ENCODE measurements at regions of chr3 and their contacts with region 1.

Region 1: DNA sequence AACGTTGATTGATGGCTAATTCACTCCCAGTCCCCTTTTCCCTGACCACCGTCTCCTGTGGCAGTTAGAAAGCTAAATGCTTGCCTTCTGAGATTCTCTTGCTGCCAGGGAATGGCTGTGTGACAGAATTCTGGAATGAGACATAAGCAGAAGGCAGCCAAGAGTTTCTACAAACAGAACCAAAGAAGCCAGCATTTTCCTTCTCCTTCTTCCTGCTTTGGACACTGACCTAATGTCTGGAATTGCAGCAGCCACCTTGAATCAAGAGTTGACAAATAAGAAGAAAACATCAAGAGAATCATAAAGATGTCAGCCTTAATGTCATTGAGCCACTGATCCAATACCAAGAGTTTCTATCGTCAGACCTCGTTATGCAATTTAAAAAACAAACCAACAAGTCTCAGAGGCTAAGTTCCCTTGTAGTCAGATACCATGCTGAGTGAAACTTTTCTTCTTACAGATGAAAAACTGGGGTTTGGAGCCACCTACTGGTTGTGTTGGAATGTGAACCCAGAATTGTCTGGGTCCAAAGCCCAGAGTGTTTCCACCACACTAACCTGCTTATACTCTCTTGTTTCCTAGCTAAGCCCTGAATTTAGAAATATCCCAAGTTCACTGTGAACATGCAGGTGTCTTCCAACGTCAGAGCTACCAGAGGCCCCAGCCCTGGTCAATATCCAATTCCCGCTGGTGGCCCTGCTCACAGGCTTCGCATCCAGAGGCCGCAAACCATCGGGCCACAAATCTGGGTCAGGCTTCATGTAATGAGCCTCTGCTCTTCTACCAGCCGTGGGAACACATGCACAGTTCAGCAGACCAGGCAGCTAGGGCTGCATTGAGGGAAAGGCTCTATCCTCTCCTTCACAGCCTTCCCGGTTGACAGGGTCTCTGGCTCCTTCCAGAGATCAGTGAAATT is 42.5 kb downstream of the MCF2L2 start:
- DNase-seq: peak; percentile 85
- H3K4me3 ChIP-seq: peak overlapping the region; percentile 23
- H3K27ac ChIP-seq: no peak overlapping the region
- H3K4me1 ChIP-seq: peaks cover 8% of the 10 kb centered on the region; the same call in 1 of the 2 replicates
- H3K27me3 ChIP-seq: no peaks in the 10 kb centered on the region

Region 2: GRCh38 chr3:182713743-182714517 is 672.0 kb before region 1 on chr3:
- in situ Hi-C with region 1: loop called (anchors 25 kb)
- DNase-seq: peak; percentile 80
- H3K4me3 ChIP-seq: no peak overlapping the region
- H3K27ac ChIP-seq: no peak overlapping the region
- H3K4me1 ChIP-seq: no peaks in the 10 kb centered on the region
- H3K27me3 ChIP-seq: no peaks in the 10 kb centered on the region

Region 3: GRCh38 chr3:182909318-182910040 is 476.5 kb before region 1 on chr3:
- in situ Hi-C with region 1: loop called (anchors 25 kb)
- DNase-seq: peak; percentile 44
- H3K4me3 ChIP-seq: no peak overlapping the region
- H3K27ac ChIP-seq: no peak overlapping the region
- H3K4me1 ChIP-seq: 0 out of 2 replicates have a peak, but pooled peaks cover 12% of the 10 kb centered on the region
- H3K27me3 ChIP-seq: no peaks in the 10 kb centered on the region

Region 4: DNA sequence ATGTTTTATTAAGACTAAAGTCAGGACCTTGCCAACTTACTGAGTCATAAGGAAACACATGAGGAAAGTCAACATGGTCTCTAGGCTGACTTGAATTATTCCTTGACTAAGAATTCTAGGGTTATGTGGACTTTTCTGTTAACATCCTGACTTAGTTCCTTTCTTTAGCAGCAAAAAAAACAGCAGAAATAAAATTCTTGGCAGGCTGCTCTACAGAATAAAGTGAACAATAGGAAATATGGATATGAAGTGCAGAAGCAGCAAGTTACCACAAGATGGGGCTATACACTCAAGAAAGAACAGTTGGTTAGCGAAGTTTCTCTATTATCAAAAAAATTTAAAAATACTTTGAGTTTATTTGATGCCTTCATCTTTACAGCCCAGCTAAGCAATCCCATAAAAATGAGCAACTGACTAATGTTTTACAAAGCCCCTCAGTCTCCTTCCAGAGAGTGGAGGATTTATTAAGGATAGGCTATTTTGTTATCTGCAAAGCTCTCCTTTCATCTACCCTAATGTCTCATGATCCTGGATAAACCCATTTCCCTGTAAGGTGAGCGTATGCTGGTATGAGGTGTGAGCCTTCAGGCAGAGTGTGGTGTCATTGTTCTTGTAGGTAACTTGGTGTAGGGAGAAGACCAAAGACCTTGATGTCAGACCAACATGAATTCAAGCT is 263.6 kb before region 1 on chr3:
- in situ Hi-C with region 1: loop called (anchors 10 kb)
- DNase-seq: peak; percentile 73
- H3K4me3 ChIP-seq: no peak overlapping the region
- H3K27ac ChIP-seq: no peak overlapping the region
- H3K4me1 ChIP-seq: no peaks in the 10 kb centered on the region
- H3K27me3 ChIP-seq: peaks cover 4% of the 10 kb centered on the region; the same call in 1 of the 2 replicates

Region 5: DNA sequence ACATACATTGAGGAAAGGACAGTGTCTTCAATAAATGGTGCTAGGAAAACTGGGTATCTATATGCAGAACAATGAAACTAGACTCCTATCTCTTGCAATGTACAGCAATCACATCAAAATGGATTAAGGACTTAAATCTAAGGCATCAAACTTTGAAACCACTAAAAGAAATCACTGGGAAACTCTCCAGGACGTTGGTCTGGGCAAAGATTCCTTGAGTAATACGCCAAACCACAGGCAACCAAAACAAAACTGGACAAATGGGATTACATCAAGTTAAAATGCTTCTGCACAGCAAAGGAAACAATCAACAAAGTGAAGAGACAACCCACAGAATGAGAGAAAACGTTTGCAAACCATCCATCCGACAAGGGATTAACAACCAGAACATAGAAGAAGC is 237.9 kb before region 1 on chr3:
- in situ Hi-C with region 1: no loop called
- DNase-seq: peak; percentile 72
- H3K4me3 ChIP-seq: no peak overlapping the region
- H3K27ac ChIP-seq: no peak overlapping the region
- H3K4me1 ChIP-seq: 0 out of 2 replicates have a peak, but pooled peaks cover 5% of the 10 kb centered on the region
- H3K27me3 ChIP-seq: peaks cover 44% of the 10 kb centered on the region

Region 6: DNA sequence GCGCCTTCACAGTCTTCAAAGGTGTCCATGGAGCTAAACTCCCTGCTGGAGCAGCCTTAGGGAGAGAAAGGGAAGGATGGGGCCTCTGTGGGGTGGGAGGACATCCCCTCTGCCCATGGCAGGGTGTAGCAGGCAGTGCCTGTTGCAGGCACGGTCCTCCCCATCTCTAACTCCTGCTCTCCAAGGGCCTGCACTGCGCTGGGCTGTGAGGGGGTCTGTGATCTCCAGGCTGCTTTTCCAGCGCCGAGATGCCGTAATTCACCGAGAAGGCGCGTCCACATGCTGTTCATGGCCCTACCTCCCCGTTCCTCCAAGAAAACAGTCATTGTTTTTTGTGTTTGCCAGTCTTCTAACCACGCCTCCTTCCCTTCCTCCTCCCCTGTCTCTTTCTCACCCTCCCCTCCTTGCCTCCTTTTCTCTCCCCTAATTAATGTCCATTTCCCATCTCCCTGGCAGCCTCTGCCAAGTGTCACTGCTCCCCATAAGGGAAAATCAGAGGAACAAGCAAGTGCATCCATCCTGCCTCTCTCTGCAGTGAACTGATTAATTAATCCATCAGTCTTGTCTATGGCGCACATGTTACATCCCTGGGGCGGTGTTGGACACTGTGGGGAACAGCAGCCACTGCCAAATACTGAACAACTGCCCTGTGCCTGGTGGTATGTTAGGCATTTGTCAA is 205.7 kb before region 1 on chr3:
- in situ Hi-C with region 1: loop called (anchors 5 kb)
- DNase-seq: peak; percentile 13
- H3K4me3 ChIP-seq: no peak overlapping the region
- H3K27ac ChIP-seq: no peak overlapping the region
- H3K4me1 ChIP-seq: peaks cover 5% of the 10 kb centered on the region
- H3K27me3 ChIP-seq: peaks cover 24% of the 10 kb centered on the region; the same call in 1 of the 2 replicates

Region 7: DNA sequence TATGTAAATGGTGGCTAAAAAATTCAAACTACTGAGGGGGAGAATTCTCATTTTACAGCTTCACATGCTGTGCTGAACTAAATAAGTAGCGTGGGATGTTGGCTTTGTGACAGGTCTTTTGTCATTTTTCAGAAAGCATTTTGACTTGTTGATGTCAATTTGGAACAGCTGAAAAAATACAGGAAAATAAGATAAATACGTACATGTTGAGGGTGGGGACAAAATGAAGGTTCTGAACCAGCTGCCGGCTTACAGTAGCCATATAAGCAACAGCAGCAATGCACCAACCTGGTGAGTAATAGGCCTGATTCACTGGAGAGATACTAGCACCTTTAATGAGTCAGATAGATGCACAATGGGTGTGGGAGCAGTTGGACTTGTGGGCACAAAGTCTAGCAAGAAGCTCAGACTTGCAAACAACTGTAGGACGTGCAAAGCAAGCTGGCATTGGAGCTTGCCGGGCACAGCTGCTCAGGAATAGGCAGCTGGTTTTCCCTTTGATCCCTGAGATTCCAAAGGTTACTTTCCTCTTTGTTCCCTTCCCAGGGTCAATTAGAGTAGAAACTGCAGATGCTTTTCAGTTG is 120.0 kb before region 1 on chr3:
- in situ Hi-C with region 1: no loop called
- DNase-seq: peak; percentile 93
- H3K4me3 ChIP-seq: no peak overlapping the region
- H3K27ac ChIP-seq: no peak overlapping the region
- H3K4me1 ChIP-seq: peaks cover 14% of the 10 kb centered on the region
- H3K27me3 ChIP-seq: no peaks in the 10 kb centered on the region

Region 8: DNA sequence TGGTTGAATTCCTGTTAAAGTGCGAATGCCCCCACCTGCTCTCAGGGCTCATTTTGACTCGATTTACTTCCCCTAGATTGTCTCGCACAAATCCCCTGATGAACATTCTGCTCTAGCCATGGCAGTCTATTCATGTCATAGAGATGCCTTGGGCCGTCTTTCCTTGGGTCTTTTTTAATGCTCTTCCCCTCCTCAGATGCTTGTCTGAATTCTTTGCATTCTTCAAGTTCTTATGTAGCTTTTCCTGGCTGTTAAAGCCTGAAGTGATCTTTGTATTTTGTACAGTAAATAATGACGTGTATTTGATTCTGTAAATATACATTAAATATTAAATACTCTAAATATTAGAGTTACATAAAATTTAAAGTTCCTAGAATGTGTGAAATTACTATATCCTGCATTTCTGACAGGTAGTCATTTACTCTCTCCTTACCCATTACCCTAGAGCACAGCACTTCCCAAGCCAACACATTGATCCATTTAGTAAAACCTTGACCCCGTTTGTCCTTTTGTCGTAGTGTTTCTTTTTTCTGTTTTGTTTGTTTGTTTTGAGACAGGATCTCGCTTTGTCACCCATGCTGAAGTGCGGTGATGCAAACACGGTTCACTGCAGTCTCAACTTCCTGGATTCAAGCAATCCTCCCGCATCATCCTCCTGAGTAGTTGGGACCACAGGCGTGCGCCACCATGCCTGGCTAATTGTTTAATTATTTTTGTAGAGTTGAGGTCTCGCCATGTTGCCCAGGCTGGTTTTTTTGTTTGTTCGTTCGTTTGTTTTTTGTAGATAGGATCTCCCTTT is 359.5 kb after region 1 on chr3:
- in situ Hi-C with region 1: no loop called
- DNase-seq: no peak
- H3K4me3 ChIP-seq: no peak overlapping the region
- H3K27ac ChIP-seq: no peak overlapping the region
- H3K4me1 ChIP-seq: no peaks in the 10 kb centered on the region
- H3K27me3 ChIP-seq: no peaks in the 10 kb centered on the region

Measured in GM23248 (cell line).